ENCODE measurements at regions of chr16 and their contacts with region 1.

Region 1: GRCh38 chr16:62068747-62069146 is 32.5 kb upstream of the CDH8 start:
- DNase-seq: no peak
- H3K4me3 ChIP-seq: no peak overlapping the region
- CTCF ChIP-seq: peak; percentile 4

Region 2: GRCh38 chr16:61391896-61392295 is 676.9 kb before region 1 on chr16:
- in situ Hi-C with region 1: loop called (anchors 5 kb)
- DNase-seq: no peak
- H3K4me3 ChIP-seq: no peak overlapping the region
- CTCF ChIP-seq: no peak

Region 3: GRCh38 chr16:61968242-61969076 is 100.3 kb before region 1 on chr16:
- in situ Hi-C with region 1: no loop called
- DNase-seq: no peak
- H3K4me3 ChIP-seq: no peak overlapping the region
- CTCF ChIP-seq: no peak

Measured in astrocyte of the cerebellum (primary cell).